CD4-positive, alpha-beta T cell (primary cell): ENCODE measurements at regions of chr12 and their contacts with region 1.

Region 1: DNA sequence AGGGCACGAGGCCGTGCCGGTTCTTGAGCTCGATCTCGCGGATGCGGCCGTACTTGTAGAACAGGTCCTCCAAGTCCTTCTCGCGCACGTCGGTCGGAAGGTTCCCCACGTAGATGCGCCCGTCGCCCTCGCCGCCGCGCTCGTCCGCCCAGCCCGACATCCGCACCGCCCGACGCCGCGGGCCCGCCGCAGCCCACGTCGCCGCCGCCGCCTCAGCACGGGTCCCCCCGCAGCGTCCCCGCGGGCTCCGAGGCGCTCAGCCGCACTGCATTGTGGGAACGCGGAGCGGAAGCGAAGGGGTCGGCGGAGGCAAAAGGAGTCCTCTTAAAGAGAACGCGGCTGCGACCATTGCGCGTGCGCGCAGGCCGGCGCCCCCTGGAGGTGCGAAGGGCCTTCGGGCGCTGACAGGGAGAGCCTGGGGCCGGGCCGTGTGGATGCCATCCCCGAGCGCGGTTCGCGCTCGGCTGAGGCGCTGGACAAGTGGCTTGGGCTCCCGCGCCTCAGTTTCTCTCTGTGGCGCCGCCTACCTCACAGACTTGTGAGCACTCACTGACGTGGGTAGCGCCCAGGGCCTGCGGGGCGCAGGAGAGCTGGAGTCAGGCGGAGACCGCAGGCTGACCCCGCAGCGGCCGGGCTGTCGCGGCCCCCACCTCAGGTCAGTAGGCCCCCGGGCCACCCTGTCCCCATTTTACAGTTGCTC is at the start of gene SRSF9:
- DNase-seq: peak; percentile 94 to 99 (median 97)
- ATAC-seq: peak; percentile 86
- H3K4me3 ChIP-seq: peak within 1 kb of the TSS; percentile 57
- H3K4me3 Mint-ChIP-seq: peak within 1 kb of the TSS; percentile 90
- H3K27ac ChIP-seq: peak within 1 kb of the TSS; percentile 72 to 77
- H3K27ac Mint-ChIP-seq: peak within 1 kb of the TSS; percentile 87
- H3K4me1 ChIP-seq: peaks cover 39% of the 10 kb centered on the region
- H3K4me1 Mint-ChIP-seq: peaks cover 46% of the 10 kb centered on the region
- H3K27me3 ChIP-seq: no peaks in the 10 kb centered on the region
- H3K27me3 Mint-ChIP-seq: no peaks in the 10 kb centered on the region
- CTCF ChIP-seq: peak; percentile 91
- total RNA-seq, gene SRSF9: 124 TPM

Region 2: GRCh38 chr12:120194534-120195395 is 274.8 kb before region 1 on chr12 and contains the start of gene GCN1:
- CTCF ChIA-PET with region 1: no interaction called
- POLR2A ChIA-PET with region 1: no interaction called
- intact Hi-C with region 1: loop called in 1 of 2 experiments (anchors 10 kb)
- DNase-seq: peak; percentile 75 to 92 (median 86)
- ATAC-seq: peak; percentile 88
- H3K4me3 ChIP-seq: peak within 1 kb of the TSS; percentile 64
- H3K4me3 Mint-ChIP-seq: peak within 1 kb of the TSS; percentile 95
- H3K27ac ChIP-seq: peak within 1 kb of the TSS; percentile 75 to 86
- H3K27ac Mint-ChIP-seq: peak within 1 kb of the TSS; percentile 98
- H3K4me1 ChIP-seq: peaks cover 49% of the 10 kb centered on the region
- H3K4me1 Mint-ChIP-seq: peaks cover 45% of the 10 kb centered on the region
- H3K27me3 ChIP-seq: no peaks in the 10 kb centered on the region
- H3K27me3 Mint-ChIP-seq: no peaks in the 10 kb centered on the region
- CTCF ChIP-seq: no peak
- total RNA-seq, gene GCN1: 121 to 128 TPM

Region 3: DNA sequence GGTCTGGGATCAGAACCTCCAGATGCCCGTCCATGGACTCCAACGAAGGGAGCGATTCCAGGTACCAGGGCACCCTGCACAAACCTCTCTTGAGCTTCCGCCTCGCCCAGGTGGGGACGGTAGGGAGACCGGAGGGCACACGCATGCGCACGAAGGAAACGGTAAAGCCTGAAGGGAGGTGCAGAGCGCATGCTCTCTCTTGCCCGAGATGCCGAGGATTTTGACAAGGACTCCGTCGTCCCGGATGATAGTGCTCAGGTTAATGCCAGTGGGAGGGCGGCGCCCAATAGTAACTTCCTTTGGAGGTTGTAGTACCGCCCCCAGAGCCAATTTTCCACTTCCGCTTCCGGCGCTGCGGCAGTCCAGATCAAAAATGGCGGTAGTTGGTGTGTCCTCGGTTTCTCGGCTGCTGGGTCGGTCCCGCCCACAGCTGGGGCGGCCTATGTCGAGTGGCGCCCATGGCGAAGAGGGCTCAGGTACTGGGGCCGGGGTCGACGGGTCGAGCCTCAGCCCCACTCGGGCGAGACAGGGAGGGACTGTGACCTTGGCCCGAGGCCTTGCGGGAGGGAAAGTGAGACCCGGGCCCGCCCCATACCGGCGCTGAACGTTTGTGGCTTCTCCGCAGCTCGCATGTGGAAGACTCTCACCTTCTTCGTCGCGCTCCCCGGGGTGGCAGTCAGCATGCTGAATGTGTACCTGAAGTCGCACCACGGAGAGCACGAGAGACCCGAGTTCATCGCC is 31.7 kb before region 1 on chr12 and contains the start of gene COX6A1:
- CTCF ChIA-PET with region 1: interaction called, 15 read pairs
- POLR2A ChIA-PET with region 1: interaction called, 9 read pairs
- intact Hi-C with region 1: loop called (anchors 1 kb)
- DNase-seq: peak; percentile 91 to 100 (median 96)
- ATAC-seq: peak; percentile 94
- H3K4me3 ChIP-seq: peak within 1 kb of the TSS; percentile 88
- H3K4me3 Mint-ChIP-seq: peak within 1 kb of the TSS; percentile 97
- H3K27ac ChIP-seq: peak within 1 kb of the TSS; percentile 69 to 88
- H3K27ac Mint-ChIP-seq: peak within 1 kb of the TSS; percentile 94
- H3K4me1 ChIP-seq: peaks cover 26% of the 10 kb centered on the region
- H3K4me1 Mint-ChIP-seq: peaks cover 31% of the 10 kb centered on the region
- H3K27me3 ChIP-seq: no peaks in the 10 kb centered on the region
- H3K27me3 Mint-ChIP-seq: no peaks in the 10 kb centered on the region
- CTCF ChIP-seq: no peak
- total RNA-seq, gene COX6A1: 112 to 116 TPM

Region 4: GRCh38 chr12:120453977-120454376 is 15.6 kb before region 1 on chr12:
- CTCF ChIA-PET with region 1: interaction called, 10 read pairs
- POLR2A ChIA-PET with region 1: interaction called, 6 read pairs
- intact Hi-C with region 1: no loop called
- DNase-seq: peak in 4 of 14 experiments; percentile 32 to 64 (median 57)
- ATAC-seq: peak; percentile 95
- H3K4me3 ChIP-seq: no peak overlapping the region
- H3K4me3 Mint-ChIP-seq: peak overlapping the region; percentile 38
- H3K27ac ChIP-seq: no peak overlapping the region
- H3K27ac Mint-ChIP-seq: peak overlapping the region; percentile 55
- H3K4me1 ChIP-seq: peaks cover 9% of the 10 kb centered on the region
- H3K4me1 Mint-ChIP-seq: peaks cover 8% of the 10 kb centered on the region
- H3K27me3 ChIP-seq: no peaks in the 10 kb centered on the region
- H3K27me3 Mint-ChIP-seq: no peaks in the 10 kb centered on the region
- CTCF ChIP-seq: peak; percentile 61

Region 5: GRCh38 chr12:120534203-120534702 is 64.7 kb after region 1 on chr12 and contains the start of gene RNF10:
- CTCF ChIA-PET with region 1: interaction called, 4 read pairs
- POLR2A ChIA-PET with region 1: interaction called, 13 read pairs
- intact Hi-C with region 1: no loop called
- DNase-seq: peak; percentile 53 to 92 (median 68)
- ATAC-seq: peak; percentile 65
- H3K4me3 ChIP-seq: peak within 1 kb of the TSS; percentile 92
- H3K4me3 Mint-ChIP-seq: peak within 1 kb of the TSS; percentile 91
- H3K27ac ChIP-seq: peak within 1 kb of the TSS; percentile 66 to 89
- H3K27ac Mint-ChIP-seq: peak within 1 kb of the TSS; percentile 91
- H3K4me1 ChIP-seq: peaks cover 49% of the 10 kb centered on the region
- H3K4me1 Mint-ChIP-seq: peaks cover 62% of the 10 kb centered on the region
- H3K27me3 ChIP-seq: no peaks in the 10 kb centered on the region
- H3K27me3 Mint-ChIP-seq: no peaks in the 10 kb centered on the region
- CTCF ChIP-seq: no peak
- total RNA-seq, gene RNF10: 441 to 446 TPM